ENCODE measurements at regions of chr6 and their contacts with region 1.

Region 1: DNA sequence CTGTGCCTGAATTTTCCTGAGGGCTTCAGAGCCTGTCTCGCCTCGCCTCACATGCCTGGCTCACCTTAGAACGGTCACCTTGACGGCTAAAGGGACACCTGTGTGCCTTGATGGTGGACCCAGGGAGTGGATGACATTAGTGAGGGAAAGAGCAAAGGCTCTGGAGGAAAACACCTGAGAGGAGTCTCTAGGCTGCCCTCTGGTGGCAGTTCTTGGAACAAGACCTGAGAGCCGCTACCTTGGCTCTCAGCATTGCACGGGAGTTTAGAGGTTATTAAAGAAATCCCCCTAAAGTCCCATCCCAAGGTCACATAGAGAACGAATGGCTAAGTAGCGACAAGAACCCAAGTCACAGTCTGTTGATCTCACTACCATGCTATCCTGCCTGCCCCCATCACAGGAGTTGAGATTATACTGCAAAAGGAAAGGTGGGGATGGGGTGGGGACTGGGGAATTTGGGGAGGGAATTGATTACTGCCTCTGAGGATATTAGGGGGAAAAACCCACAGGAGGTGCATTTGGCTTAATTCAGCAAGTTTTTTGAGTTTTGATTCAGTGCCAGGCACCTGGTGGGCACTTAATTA is 7.9 kb upstream of the CDSN start:
- DNase-seq: peak; percentile 60
- H3K4me3 ChIP-seq: no peak overlapping the region; a peak in 1 of 4 replicates
- H3K27ac ChIP-seq: no peak overlapping the region
- H3K4me1 ChIP-seq: peaks cover 0 to 6% of the 10 kb centered on the region in 2 experiments; a peak in 2 of 4 replicates
- H3K27me3 ChIP-seq: no peaks in the 10 kb centered on the region
- CTCF ChIP-seq: peak; percentile 73
- EP300 ChIP-seq: no peak
- RAD21 ChIP-seq: peak; percentile 39

Region 2: DNA sequence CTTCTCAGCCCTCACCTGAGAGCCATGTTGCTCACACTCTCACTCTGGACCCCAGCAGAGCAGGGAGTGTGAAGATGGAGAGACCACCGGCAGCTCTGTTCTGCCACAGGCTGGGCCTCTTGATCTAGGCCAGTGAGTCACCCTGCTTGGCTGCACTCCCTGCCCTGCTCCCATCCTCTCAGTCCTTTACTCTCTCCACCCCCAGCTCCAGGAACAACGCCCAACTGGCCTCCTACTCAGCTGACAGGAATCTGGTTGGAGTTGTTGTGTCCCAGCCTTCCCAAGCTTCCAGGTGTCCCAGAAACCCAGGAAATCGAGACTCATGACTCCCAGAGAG is 13.7 kb before region 1 on chr6 and contains the start of gene PSORS1C1:
- CTCF ChIA-PET with region 1: interaction called, 20 read pairs
- POLR2A ChIA-PET with region 1: no interaction called
- DNase-seq: no peak
- H3K4me3 ChIP-seq: peak within 1 kb of the TSS; percentile 37 to 56; a peak in 3 of 4 replicates
- H3K27ac ChIP-seq: peak within 1 kb of the TSS; percentile 67 to 86
- H3K4me1 ChIP-seq: peaks cover 2 to 12% of the 10 kb centered on the region in 2 experiments; a peak in 3 of 4 replicates
- H3K27me3 ChIP-seq: no peaks in the 10 kb centered on the region; the same call in 1 of the 2 replicates
- CTCF ChIP-seq: no peak
- EP300 ChIP-seq: peak in 1 of 2 experiments; percentile 60; a peak in 1 of 4 replicates
- RAD21 ChIP-seq: no peak
- polyA plus RNA-seq, gene PSORS1C1: 3.0 and 3.1 TPM in 2 replicates